K562 (cell line): ENCODE measurements at regions of chr11 and their contacts with region 1.

Region 1: DNA sequence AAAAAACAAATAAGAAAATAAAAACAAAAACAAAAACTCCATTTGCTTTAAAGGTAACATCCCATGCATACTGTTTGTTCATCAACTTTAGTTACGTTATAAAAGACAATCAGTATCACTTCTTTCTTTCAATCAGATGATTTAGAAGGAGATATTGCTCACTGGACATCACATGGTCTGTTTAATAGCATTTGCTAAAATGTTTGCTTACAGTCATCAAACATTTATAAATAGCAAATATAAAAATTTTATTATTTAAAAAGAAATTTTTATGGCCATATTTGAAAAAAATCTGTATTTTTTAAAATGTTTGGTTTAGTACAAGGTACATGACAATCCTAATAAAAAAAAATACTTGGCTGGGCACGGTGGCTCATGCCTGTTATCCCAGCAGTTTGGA is 22.6 kb downstream of the MMP26 start:
- DNase-seq: no peak
- ATAC-seq: no peak
- H3K4me3 ChIP-seq: no peak overlapping the region
- H3K27ac ChIP-seq: no peak overlapping the region
- H3K4me1 ChIP-seq: 0 out of 5 replicates have a peak, but pooled peaks cover 0 to 3% of the 10 kb centered on the region in 2 experiments
- H3K27me3 ChIP-seq: peaks cover 0 to 18% of the 10 kb centered on the region in 2 experiments; a peak in 4 of 5 replicates
- CTCF ChIP-seq: no peak
- EP300 ChIP-seq: no peak
- POLR2A ChIP-seq: no peak
- RAD21 ChIP-seq: no peak

Region 2: DNA sequence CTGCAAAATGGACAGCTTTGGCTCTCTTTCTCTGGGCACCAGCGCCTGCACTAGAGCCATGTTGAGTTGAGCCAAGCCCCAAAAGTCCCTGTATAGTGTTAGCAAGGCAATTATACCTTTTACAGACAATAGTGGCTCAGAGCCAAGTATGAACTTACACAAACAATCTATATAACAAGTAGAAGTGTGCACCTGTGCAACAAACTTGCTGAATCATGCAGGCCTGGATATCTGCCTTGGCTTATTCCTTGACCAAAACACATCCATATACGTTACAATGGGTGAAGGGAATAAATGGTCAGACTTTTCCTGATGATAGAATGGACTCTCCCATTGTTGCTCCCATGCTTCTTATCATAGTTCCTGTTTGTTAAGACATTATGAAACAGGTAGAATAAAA is 149.4 kb before region 1 on chr11:
- CTCF ChIA-PET with region 1: no interaction called
- POLR2A ChIA-PET with region 1: no interaction called
- in situ Hi-C with region 1: no loop called
- intact Hi-C with region 1: no loop called
- DNase-seq: no peak
- ATAC-seq: no peak
- H3K4me3 ChIP-seq: no peak overlapping the region
- H3K27ac ChIP-seq: no peak overlapping the region
- H3K4me1 ChIP-seq: no peaks in the 10 kb centered on the region
- H3K27me3 ChIP-seq: peaks cover 15 to 16% of the 10 kb centered on the region in 2 experiments; a peak in 4 of 5 replicates
- CTCF ChIP-seq: no peak
- EP300 ChIP-seq: no peak
- POLR2A ChIP-seq: no peak
- RAD21 ChIP-seq: no peak

Region 3: DNA sequence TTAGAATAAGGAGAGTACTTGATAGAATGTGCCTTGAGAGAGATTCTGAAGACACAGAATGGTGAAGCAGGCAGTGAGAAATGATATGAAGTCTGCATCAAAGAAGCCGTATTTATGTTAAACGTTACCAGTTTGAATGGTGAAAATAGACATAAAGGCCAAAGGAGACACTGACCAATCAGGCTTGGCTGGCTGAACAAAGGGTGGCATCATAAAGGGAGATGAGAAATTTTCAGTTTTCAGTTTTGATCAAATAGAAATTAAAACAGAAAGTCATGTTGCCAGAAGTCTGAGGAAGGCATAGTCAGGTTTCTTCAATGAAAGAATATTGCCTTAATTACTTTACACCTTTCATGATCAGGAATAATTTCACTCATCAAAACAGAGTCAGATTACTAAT is 35.9 kb after region 1 on chr11:
- CTCF ChIA-PET with region 1: no interaction called
- POLR2A ChIA-PET with region 1: no interaction called
- in situ Hi-C with region 1: no loop called
- intact Hi-C with region 1: no loop called
- DNase-seq: no peak
- ATAC-seq: no peak
- H3K4me3 ChIP-seq: no peak overlapping the region
- H3K27ac ChIP-seq: no peak overlapping the region
- H3K4me1 ChIP-seq: no peaks in the 10 kb centered on the region
- H3K27me3 ChIP-seq: peaks cover 2 to 5% of the 10 kb centered on the region in 2 experiments; a peak in 1 of 5 replicates
- CTCF ChIP-seq: no peak
- EP300 ChIP-seq: no peak
- POLR2A ChIP-seq: no peak
- RAD21 ChIP-seq: no peak

Region 4: GRCh38 chr11:4991060-4991459 is 263.9 kb after region 1 on chr11:
- CTCF ChIA-PET with region 1: no interaction called
- POLR2A ChIA-PET with region 1: no interaction called
- in situ Hi-C with region 1: no loop called
- intact Hi-C with region 1: loop called (anchors 10 kb)
- DNase-seq: peak; percentile 10 to 61 (median 38)
- ATAC-seq: peak; percentile 100
- H3K4me3 ChIP-seq: no peak overlapping the region
- H3K27ac ChIP-seq: no peak overlapping the region
- H3K4me1 ChIP-seq: peaks cover 0 to 4% of the 10 kb centered on the region in 2 experiments; a peak in 1 of 5 replicates
- H3K27me3 ChIP-seq: peaks cover 2 to 9% of the 10 kb centered on the region in 2 experiments; a peak in 1 of 5 replicates
- CTCF ChIP-seq: peak; percentile 62 to 79 (median 77)
- EP300 ChIP-seq: no peak
- POLR2A ChIP-seq: no peak
- RAD21 ChIP-seq: peak; percentile 69 to 86

Region 5: DNA sequence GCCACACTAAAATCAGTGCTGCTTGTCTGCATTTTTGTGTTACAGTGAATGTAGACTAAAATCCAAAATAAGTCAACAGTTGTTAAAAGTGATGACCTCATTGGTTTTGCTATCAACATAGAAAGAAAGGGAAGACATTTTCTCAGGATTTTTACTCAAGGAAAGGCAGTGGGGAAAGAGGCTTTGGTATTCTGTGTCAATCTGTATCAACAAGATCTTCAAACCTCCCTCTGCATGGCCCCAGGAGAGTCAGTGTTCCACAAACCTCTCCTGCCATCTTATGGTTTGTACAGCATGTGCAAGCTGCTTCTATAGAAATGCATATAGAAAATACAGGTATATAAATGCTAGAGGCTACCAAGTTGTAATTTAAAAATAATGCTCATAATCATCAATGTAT is 642.6 kb after region 1 on chr11:
- CTCF ChIA-PET with region 1: no interaction called
- POLR2A ChIA-PET with region 1: no interaction called
- in situ Hi-C with region 1: no loop called
- intact Hi-C with region 1: no loop called
- DNase-seq: peak in 2 of 4 experiments; percentile 42 to 63
- ATAC-seq: peak; percentile 84
- H3K4me3 ChIP-seq: no peak overlapping the region
- H3K27ac ChIP-seq: no peak overlapping the region
- H3K4me1 ChIP-seq: peaks cover 0 to 15% of the 10 kb centered on the region in 2 experiments; a peak in 2 of 5 replicates
- H3K27me3 ChIP-seq: no peaks in the 10 kb centered on the region
- CTCF ChIP-seq: peak; percentile 46 to 68 (median 50); a peak in 4 of 6 replicates
- EP300 ChIP-seq: no peak
- POLR2A ChIP-seq: no peak
- RAD21 ChIP-seq: peak; percentile 72 to 82